RWPE1 (cell line): ENCODE measurements at regions of chr7 and their contacts with region 1.

Region 1: GRCh38 chr7:7489546-7489945 is 46.1 kb downstream of the COL28A1 start:
- DNase-seq: no peak
- H3K27ac ChIP-seq: no peak overlapping the region
- CTCF ChIP-seq: no peak

Region 2: DNA sequence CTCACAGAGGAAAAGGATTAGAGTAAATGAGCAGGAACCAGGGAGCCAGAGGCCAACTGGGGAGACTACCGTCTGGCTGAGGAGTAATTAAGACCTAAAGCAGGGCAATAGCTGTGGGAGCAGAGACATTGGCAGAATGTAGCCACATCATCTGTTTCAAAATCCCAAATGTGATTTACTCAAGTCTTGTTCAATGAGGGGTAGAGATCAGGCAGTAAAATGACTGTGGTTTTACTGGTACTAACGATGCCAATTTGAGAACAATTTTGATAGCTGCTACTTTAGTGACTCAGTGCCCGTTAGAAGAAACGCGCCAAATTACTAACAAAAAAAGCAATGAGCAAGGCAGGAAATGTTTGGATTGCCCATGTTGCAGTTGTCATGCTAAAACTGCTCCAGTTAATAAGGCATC is 64.5 kb after region 1 on chr7:
- CTCF ChIA-PET with region 1: no interaction called
- POLR2A ChIA-PET with region 1: interaction called, 11 read pairs
- DNase-seq: no peak
- H3K27ac ChIP-seq: no peak overlapping the region
- CTCF ChIP-seq: no peak